Posterior vena cava (tissue), 2 donors: ENCODE measurements at regions of chr1 and their contacts with region 1.

Region 1: DNA sequence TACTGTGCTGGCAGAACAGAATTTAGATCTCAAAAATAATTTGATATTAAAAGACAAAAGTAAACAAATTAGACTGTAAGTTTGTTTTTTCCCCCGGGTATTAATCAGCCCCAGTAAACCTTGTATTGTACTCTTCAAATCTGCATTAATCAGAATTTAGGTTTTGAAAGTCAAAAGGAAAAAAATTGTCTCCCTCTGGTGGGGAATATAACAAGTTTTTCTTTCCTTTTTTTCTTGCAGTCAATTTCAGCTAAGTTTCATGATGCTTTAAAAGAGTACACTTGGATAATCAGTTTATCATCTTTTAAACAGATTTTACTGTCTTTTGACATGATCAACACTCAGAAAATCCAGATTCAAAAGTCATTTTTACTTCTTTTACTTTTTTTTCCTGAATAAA is 134.5 kb upstream of the PKN2 start:
- DNase-seq: no peak

Region 2: GRCh38 chr1:88150330-88150729 is 399.2 kb before region 1 on chr1:
- intact Hi-C with region 1: no loop called
- DNase-seq: no peak

Region 3: GRCh38 chr1:88333086-88333695 is 216.3 kb before region 1 on chr1:
- intact Hi-C with region 1: no loop called
- DNase-seq: no peak

Region 4: GRCh38 chr1:88523854-88524528 is 25.5 kb before region 1 on chr1:
- intact Hi-C with region 1: loop called in 1 of 2 experiments (anchors 1 kb)
- DNase-seq: no peak